ENCODE measurements at regions of chr9 and their contacts with region 1.

Region 1: DNA sequence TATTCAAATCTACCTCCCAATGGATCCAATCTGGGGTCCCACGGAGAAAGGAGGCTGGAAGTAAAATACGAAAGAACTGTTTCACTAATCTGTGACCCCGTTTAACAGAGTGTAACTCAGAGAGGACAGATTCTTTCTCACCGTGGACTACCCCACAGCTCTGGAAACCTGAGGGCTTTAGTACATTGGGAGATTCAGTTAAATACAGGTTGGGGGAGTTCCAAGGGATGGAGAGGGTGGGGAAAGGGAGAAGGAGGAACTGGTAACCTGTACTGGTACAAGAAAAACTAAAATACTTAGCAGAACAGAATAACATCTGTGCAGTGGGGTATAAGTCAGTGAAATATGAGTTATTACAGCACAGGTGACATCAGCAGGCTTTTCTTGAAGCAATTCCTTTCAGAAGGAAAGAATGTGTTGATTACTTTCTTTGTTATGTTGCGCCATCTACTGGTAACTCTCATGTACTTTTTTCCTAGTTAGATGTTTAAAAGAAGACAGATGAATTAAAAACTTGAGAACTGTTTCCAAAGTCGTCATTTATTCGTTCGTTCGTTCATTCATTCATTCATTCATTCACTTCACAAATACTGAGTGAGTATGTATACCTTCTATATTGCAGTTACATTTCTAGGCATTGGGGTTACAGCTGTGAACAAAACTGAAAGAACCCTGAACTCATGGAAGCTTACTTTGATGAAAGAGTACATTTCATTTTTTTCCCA is 30.0 kb upstream of the STOM start:
- DNase-seq: peak; percentile 42 to 77 (median 46)
- ATAC-seq: peak; percentile 79
- H3K4me3 ChIP-seq: no peak overlapping the region
- H3K27ac ChIP-seq: no peak overlapping the region
- H3K4me1 ChIP-seq: peaks cover 0 to 5% of the 10 kb centered on the region in 2 experiments; a peak in 2 of 5 replicates
- H3K27me3 ChIP-seq: no peaks in the 10 kb centered on the region
- CTCF ChIP-seq: peak; percentile 43 to 86 (median 71); a peak in 3 of 6 replicates
- EP300 ChIP-seq: no peak
- POLR2A ChIP-seq: no peak
- RAD21 ChIP-seq: peak; percentile 93 to 96

Region 2: GRCh38 chr9:120985810-120986222 is 414.2 kb before region 1 on chr9:
- CTCF ChIA-PET with region 1: no interaction called
- POLR2A ChIA-PET with region 1: no interaction called
- in situ Hi-C with region 1: no loop called
- intact Hi-C with region 1: loop called (anchors 10 kb)
- DNase-seq: peak; percentile 25 to 68 (median 28)
- ATAC-seq: peak; percentile 80
- H3K4me3 ChIP-seq: no peak overlapping the region
- H3K27ac ChIP-seq: no peak overlapping the region
- H3K4me1 ChIP-seq: peaks cover 0 to 13% of the 10 kb centered on the region in 2 experiments; a peak in 3 of 5 replicates
- H3K27me3 ChIP-seq: no peaks in the 10 kb centered on the region
- CTCF ChIP-seq: peak; percentile 41 to 79 (median 65); a peak in 5 of 6 replicates
- EP300 ChIP-seq: peak; percentile 32; the same call in 1 of the 2 replicates
- POLR2A ChIP-seq: no peak
- RAD21 ChIP-seq: peak; percentile 72 to 75

Region 3: DNA sequence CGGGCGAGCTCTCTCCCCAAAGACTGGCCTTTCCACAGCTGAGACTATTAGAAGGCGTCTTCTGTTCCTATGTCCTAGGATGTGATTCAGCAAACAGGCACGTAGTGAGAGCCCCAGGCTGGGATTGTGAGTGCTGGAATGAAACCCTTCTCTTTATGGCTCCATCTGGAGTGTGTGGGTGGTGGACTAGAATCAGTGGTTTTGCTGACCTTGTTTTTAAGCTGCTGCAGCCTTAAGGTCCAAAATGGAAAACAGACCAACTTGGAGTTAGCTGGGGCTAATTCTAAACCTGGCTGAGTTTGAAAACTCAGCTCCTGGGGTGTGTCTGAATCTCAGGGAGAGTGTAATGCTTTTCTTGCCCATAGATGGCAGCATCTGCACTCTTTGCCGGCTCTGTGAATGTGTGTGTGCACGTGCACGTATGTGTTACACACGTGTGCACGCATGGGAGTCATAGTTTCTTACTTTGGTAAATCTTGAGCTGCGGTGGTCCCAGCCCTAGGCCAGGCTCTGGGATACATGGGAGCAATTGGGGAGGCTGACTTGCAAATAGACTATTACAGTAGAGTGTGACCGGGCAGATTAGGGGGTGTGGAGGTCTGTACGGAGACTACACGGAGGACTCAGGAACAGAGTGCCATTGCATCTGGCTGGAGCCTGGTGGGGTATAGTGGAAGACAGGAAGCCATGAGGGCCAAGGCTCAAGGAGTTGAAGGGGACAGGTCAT is 121.3 kb before region 1 on chr9:
- CTCF ChIA-PET with region 1: interaction called, 11 read pairs
- POLR2A ChIA-PET with region 1: interaction called, 3 read pairs
- in situ Hi-C with region 1: no loop called
- intact Hi-C with region 1: loop called (anchors 1 kb)
- DNase-seq: peak; percentile 60 to 81 (median 64)
- ATAC-seq: peak; percentile 90
- H3K4me3 ChIP-seq: no peak overlapping the region
- H3K27ac ChIP-seq: no peak overlapping the region
- H3K4me1 ChIP-seq: peaks cover 32 to 36% of the 10 kb centered on the region in 2 experiments
- H3K27me3 ChIP-seq: no peaks in the 10 kb centered on the region
- CTCF ChIP-seq: peak; percentile 75 to 92 (median 89)
- EP300 ChIP-seq: 0 out of 2 replicates have a peak, but pooled peaks have one; percentile 22
- POLR2A ChIP-seq: no peak
- RAD21 ChIP-seq: peak; percentile 63 to 90

Region 4: GRCh38 chr9:121321016-121321503 is 79.0 kb before region 1 on chr9:
- CTCF ChIA-PET with region 1: interaction called, 107 read pairs
- POLR2A ChIA-PET with region 1: interaction called, 3 read pairs
- in situ Hi-C with region 1: loop called (anchors 5 kb)
- intact Hi-C with region 1: loop called (anchors 1 kb)
- DNase-seq: no peak
- ATAC-seq: no peak
- H3K4me3 ChIP-seq: no peak overlapping the region
- H3K27ac ChIP-seq: no peak overlapping the region
- H3K4me1 ChIP-seq: peaks cover 0 to 7% of the 10 kb centered on the region in 2 experiments; a peak in 2 of 5 replicates
- H3K27me3 ChIP-seq: no peaks in the 10 kb centered on the region
- CTCF ChIP-seq: no peak
- EP300 ChIP-seq: no peak
- POLR2A ChIP-seq: no peak
- RAD21 ChIP-seq: no peak

Region 5: GRCh38 chr9:121326130-121326838 is 73.8 kb before region 1 on chr9:
- CTCF ChIA-PET with region 1: interaction called, 107 read pairs
- POLR2A ChIA-PET with region 1: interaction called, 3 read pairs
- in situ Hi-C with region 1: no loop called
- intact Hi-C with region 1: no loop called
- DNase-seq: no peak
- ATAC-seq: no peak
- H3K4me3 ChIP-seq: no peak overlapping the region
- H3K27ac ChIP-seq: no peak overlapping the region
- H3K4me1 ChIP-seq: peaks cover 0 to 4% of the 10 kb centered on the region in 2 experiments; a peak in 2 of 5 replicates
- H3K27me3 ChIP-seq: no peaks in the 10 kb centered on the region
- CTCF ChIP-seq: no peak
- EP300 ChIP-seq: no peak
- POLR2A ChIP-seq: no peak
- RAD21 ChIP-seq: no peak